ENCODE measurements at regions of chr1 and their contacts with region 1.

Region 1: GRCh38 chr1:48061162-48062136 is 64.3 kb upstream of the TRABD2B start:
- DNase-seq: peak; percentile 47 to 76
- H3K4me3 ChIP-seq: no peak overlapping the region
- H3K27ac ChIP-seq: no peak overlapping the region
- H3K4me1 ChIP-seq: peaks cover 0 to 6% (median 1%) of the 10 kb centered on the region in 4 experiments; a peak in 3 of 7 replicates
- H3K27me3 ChIP-seq: peaks cover 0 to 3% (median 0%) of the 10 kb centered on the region in 4 experiments; a peak in 1 of 7 replicates
- CTCF ChIP-seq: peak in 2 of 3 experiments; percentile 72 to 75; a peak in 3 of 4 replicates
- EP300 ChIP-seq: no peak
- POLR2A ChIP-seq: no peak
- RAD21 ChIP-seq: peak; percentile 76 to 83

Region 2: GRCh38 chr1:47948126-47948525 is 113.3 kb before region 1 on chr1:
- CTCF ChIA-PET with region 1: interaction called, 63 read pairs
- POLR2A ChIA-PET with region 1: no interaction called
- DNase-seq: peak in 1 of 2 experiments; percentile 27
- H3K4me3 ChIP-seq: no peak overlapping the region
- H3K27ac ChIP-seq: no peak overlapping the region
- H3K4me1 ChIP-seq: no peaks in the 10 kb centered on the region
- H3K27me3 ChIP-seq: peaks cover 0 to 3% (median 0%) of the 10 kb centered on the region in 4 experiments; a peak in 3 of 7 replicates
- CTCF ChIP-seq: peak; percentile 48 to 82 (median 73)
- EP300 ChIP-seq: peak in 1 of 2 experiments; percentile 26; a peak in 1 of 3 replicates
- POLR2A ChIP-seq: no peak
- RAD21 ChIP-seq: peak; percentile 87 to 90

Region 3: DNA sequence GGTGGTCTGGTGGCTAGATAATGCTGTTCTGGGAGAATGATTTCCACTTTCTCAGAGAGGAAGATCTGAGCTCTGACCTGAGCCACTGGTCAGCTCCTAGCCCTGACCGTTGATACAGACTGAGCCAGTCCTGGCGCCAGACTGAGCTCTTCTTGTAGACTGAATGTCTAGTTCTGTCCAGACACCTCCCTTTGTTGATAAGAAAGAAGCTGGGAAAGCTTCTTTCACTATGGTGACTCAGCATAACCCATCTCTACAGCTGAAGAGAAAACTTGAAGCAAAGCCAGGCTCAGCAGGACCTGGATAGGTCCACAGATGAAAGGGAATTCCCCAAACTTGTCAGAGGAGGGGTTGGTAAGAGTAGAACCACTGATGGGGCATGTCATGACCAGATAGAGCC is 54.4 kb before region 1 on chr1:
- CTCF ChIA-PET with region 1: interaction called, 158 read pairs
- POLR2A ChIA-PET with region 1: no interaction called
- DNase-seq: no peak
- H3K4me3 ChIP-seq: no peak overlapping the region
- H3K27ac ChIP-seq: no peak overlapping the region
- H3K4me1 ChIP-seq: peaks cover 4 to 18% (median 13%) of the 10 kb centered on the region in 4 experiments; a peak in 6 of 7 replicates
- H3K27me3 ChIP-seq: peaks cover 0 to 2% (median 0%) of the 10 kb centered on the region in 4 experiments; a peak in 1 of 7 replicates
- CTCF ChIP-seq: no peak
- EP300 ChIP-seq: no peak
- POLR2A ChIP-seq: no peak
- RAD21 ChIP-seq: no peak

Region 4: DNA sequence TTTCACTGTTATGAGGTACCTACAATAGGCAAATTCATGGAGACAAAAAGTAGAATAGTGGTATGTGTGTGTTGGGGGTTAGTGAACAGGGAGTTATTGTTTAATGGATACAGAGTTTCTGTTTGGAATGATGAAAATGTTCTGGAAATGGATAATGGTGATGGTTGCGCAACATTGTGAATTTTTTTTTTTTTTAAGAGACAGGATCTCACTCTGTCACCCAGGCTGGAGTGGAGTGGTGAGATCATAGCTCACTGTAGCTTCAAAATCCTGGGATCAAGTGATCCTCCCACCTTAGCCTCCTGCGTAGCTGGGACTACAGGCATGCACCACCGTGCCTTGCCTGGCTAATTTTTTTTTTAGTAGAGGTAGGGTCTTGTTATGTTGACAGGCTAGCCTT is 29.8 kb before region 1 on chr1:
- CTCF ChIA-PET with region 1: interaction called, 119 read pairs
- POLR2A ChIA-PET with region 1: no interaction called
- DNase-seq: no peak
- H3K4me3 ChIP-seq: no peak overlapping the region
- H3K27ac ChIP-seq: no peak overlapping the region
- H3K4me1 ChIP-seq: peaks cover 0 to 7% (median 4%) of the 10 kb centered on the region in 4 experiments; a peak in 4 of 7 replicates
- H3K27me3 ChIP-seq: no peaks in the 10 kb centered on the region
- CTCF ChIP-seq: no peak
- EP300 ChIP-seq: no peak
- POLR2A ChIP-seq: no peak
- RAD21 ChIP-seq: no peak

Region 5: GRCh38 chr1:48082271-48082962 is 21.0 kb after region 1 on chr1:
- CTCF ChIA-PET with region 1: interaction called, 21 read pairs
- POLR2A ChIA-PET with region 1: no interaction called
- DNase-seq: no peak
- H3K4me3 ChIP-seq: no peak overlapping the region
- H3K27ac ChIP-seq: no peak overlapping the region
- H3K4me1 ChIP-seq: no peaks in the 10 kb centered on the region
- H3K27me3 ChIP-seq: no peaks in the 10 kb centered on the region; a peak in 1 of 7 replicates
- CTCF ChIP-seq: no peak
- EP300 ChIP-seq: no peak
- POLR2A ChIP-seq: no peak
- RAD21 ChIP-seq: no peak

Region 6: DNA sequence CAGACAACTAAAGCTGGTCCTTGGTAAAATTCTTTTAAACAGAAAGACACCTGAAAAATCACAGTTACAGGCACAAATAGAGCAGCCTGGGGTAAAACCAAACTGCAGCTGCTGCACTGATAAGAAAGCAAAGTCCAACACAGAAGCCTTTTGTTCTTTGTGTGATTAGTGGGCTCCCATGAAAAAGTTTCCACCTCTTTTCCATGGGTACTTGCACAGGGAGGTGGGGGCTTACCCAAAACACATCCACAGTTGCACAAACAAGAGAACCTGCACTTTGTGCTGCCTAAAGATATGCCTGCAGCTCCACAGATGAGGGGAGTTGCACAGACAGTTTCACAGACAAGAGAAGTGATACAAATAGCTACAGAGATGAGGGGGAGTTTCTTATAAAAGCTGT is 54.4 kb after region 1 on chr1:
- CTCF ChIA-PET with region 1: no interaction called
- POLR2A ChIA-PET with region 1: no interaction called
- DNase-seq: no peak
- H3K4me3 ChIP-seq: no peak overlapping the region
- H3K27ac ChIP-seq: no peak overlapping the region
- H3K4me1 ChIP-seq: no peaks in the 10 kb centered on the region; a peak in 1 of 7 replicates
- H3K27me3 ChIP-seq: no peaks in the 10 kb centered on the region
- CTCF ChIP-seq: no peak
- EP300 ChIP-seq: no peak
- POLR2A ChIP-seq: no peak
- RAD21 ChIP-seq: no peak

Region 7: DNA sequence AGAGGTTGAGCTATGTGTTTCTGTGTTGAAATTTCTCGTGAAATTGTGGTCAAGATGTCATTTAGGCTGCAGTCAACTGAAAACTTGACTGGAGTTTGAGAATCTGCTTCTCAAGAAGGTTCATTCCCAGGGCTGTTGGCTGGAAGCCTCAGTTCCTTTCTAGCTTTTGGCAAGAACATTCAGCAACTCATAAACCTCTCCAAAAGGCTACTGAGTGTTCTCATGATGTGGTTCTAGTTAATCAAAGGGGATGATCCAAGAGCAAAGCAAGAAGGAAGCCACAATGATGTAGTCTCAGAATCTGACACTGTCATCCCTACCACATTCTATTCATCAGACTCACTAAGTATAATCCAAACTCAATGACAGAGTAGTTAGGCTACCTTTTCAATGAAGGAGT is 344.0 kb after region 1 on chr1:
- CTCF ChIA-PET with region 1: no interaction called
- POLR2A ChIA-PET with region 1: no interaction called
- DNase-seq: no peak
- H3K4me3 ChIP-seq: no peak overlapping the region
- H3K27ac ChIP-seq: no peak overlapping the region
- H3K4me1 ChIP-seq: no peaks in the 10 kb centered on the region
- H3K27me3 ChIP-seq: peaks cover 0 to 1% (median 0%) of the 10 kb centered on the region in 4 experiments; a peak in 1 of 7 replicates
- CTCF ChIP-seq: no peak
- EP300 ChIP-seq: no peak
- POLR2A ChIP-seq: no peak
- RAD21 ChIP-seq: no peak